ENCODE measurements at regions of chr3 and their contacts with region 1.

Region 1: GRCh38 chr3:171829841-171830517 is 13.2 kb upstream of the TMEM212 start:
- DNase-seq: peak; percentile 84 to 92 (median 88)
- ATAC-seq: peak; percentile 92 to 95 (median 93)
- H3K4me3 ChIP-seq: no peak overlapping the region
- H3K27ac ChIP-seq: peak overlapping the region; percentile 32 to 81 (median 50)
- H3K4me1 ChIP-seq: peaks cover 0 to 49% (median 28%) of the 10 kb centered on the region in 12 donors
- H3K27me3 ChIP-seq: no peaks in the 10 kb centered on the region
- CTCF ChIP-seq: peak; percentile 40 to 87 (median 70)
- POLR2A ChIP-seq: no peak

Region 2: DNA sequence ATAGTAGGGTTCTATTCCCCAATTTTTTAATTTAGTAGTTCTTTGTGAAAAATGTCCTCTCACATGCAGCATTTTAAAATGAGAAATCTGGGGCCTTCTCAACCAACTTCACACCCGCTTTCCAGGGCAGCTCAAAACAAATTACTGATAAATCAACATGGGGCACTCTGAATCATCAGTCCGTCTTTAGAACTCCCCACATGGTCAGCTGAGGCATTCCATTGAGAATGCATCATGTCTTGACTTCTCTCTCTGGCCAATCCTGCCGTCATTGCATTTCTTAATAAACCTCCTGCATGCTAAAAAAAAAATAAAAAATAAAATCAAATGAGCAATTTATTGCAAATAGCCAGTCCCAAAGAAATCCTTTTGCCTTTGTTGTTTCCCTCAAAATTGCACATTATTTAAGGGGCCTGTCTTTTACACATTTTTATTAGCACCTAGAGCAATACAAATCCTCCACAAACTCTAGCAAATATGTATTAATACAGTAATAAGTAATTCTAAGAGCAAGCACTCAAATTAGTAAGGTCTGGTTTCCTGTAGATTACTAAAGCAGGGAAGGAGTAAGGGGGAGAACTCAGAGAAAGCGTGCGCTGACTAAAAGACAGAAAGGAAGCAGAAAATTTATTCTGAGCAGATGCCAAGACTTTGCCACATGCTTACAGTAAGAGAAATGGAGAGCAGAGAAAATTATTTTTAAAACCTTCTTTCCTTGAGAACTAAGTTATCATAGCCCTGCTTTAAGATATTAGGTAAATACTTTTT is 545.5 kb before region 1 on chr3:
- intact Hi-C with region 1: no loop called
- DNase-seq: peak in 2 of 5 donors; percentile 36 to 48
- ATAC-seq: peak; percentile 66 to 91 (median 77)
- H3K4me3 ChIP-seq: no peak overlapping the region
- H3K27ac ChIP-seq: peak overlapping the region in 11 of 12 donors; percentile 19 to 81 (median 63)
- H3K4me1 ChIP-seq: peaks cover 0 to 52% (median 30%) of the 10 kb centered on the region in 12 donors
- H3K27me3 ChIP-seq: no peaks in the 10 kb centered on the region
- CTCF ChIP-seq: no peak
- POLR2A ChIP-seq: no peak

Region 3: DNA sequence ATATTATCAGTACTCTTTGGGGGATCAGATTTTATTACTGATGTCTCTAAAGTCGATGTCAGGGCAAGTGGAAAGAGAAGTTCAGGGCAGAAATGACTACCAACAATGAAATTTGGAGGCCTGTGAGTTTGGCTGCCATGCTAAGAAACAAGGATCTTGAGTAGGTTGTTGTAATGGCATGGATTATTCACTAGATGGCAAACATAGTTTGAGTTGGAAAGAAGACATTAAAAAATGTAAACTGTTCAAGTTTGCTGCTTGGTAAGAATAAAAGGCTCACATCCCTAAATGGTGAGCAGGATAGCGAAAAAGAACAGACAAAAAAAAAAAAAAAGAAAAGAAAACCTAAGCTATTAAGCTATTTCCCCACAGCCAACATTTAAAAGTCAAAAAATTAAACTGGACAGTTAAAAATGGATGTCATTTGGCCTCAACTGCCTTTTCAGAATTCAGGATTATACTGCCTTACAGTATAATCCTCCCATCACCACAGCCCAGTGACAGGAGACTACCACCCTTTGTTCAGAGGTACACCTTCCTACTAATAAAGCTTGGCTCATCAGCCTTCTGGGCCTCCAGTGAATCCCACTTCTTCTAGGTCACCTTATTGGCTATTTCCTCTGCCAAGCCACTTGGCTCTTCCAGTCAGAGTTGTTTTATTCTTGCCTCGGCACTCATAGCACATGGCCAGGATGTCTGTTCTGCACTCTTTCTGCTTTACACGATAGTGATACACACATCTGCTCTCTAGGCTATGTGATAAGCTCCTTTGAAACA is 183.4 kb before region 1 on chr3:
- intact Hi-C with region 1: loop called in 6 of 10 experiments (anchors 2 to 10 kb)
- DNase-seq: peak in 4 of 5 donors; percentile 34 to 56 (median 48)
- ATAC-seq: peak; percentile 62 to 91 (median 86)
- H3K4me3 ChIP-seq: no peak overlapping the region
- H3K27ac ChIP-seq: peak overlapping the region in 11 of 12 donors; percentile 10 to 84 (median 57)
- H3K4me1 ChIP-seq: peaks cover 0 to 57% (median 22%) of the 10 kb centered on the region in 12 donors
- H3K27me3 ChIP-seq: no peaks in the 10 kb centered on the region
- CTCF ChIP-seq: peak; percentile 50 to 74 (median 60)
- POLR2A ChIP-seq: no peak

Region 4: GRCh38 chr3:171743327-171744157 is 86.4 kb before region 1 on chr3:
- intact Hi-C with region 1: no loop called
- DNase-seq: no peak
- ATAC-seq: no peak
- H3K4me3 ChIP-seq: no peak overlapping the region
- H3K27ac ChIP-seq: peak overlapping the region in 9 of 12 donors; percentile 13 to 79 (median 50)
- H3K4me1 ChIP-seq: peaks cover 0 to 74% (median 47%) of the 10 kb centered on the region in 12 donors
- H3K27me3 ChIP-seq: no peaks in the 10 kb centered on the region
- CTCF ChIP-seq: no peak
- POLR2A ChIP-seq: no peak

Region 5: DNA sequence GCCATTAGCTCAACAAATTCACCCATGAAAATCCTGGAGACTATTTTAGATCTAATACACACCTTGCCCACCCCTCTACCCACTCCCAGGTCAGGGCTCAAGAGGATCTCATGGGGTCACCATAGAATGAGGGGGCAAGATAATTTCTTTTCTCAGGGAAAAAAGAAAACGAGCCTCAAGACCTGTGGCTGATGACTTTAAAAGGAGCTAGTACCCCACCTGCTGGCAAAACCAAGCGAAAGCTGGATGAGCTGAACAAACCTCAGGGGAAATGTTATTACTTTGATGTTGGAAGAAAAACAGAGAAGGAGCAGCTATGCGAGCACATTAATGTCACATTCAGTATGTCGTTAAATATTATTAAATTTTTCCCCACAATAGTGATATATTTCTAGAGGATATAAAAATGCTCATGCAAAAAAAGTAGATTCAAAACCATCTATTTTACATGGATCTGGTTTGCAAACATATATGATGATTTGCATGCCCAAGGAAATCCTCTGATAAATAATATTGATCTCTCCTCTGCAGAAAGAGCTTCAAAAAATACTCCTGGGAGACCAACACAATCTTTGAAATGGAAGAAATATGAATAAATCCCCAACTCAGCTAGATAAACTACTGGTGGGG is 57.4 kb before region 1 on chr3:
- intact Hi-C with region 1: loop called in 2 of 10 experiments (anchors 5 to 10 kb)
- DNase-seq: peak in 4 of 5 donors; percentile 39 to 66 (median 52)
- ATAC-seq: peak; percentile 20 to 44 (median 40)
- H3K4me3 ChIP-seq: no peak overlapping the region
- H3K27ac ChIP-seq: peak overlapping the region in 3 of 12 donors; percentile 71 to 81 (median 81)
- H3K4me1 ChIP-seq: peaks cover 0 to 49% (median 19%) of the 10 kb centered on the region in 12 donors
- H3K27me3 ChIP-seq: no peaks in the 10 kb centered on the region
- CTCF ChIP-seq: peak; percentile 41 to 80 (median 67)
- POLR2A ChIP-seq: no peak

Region 6: GRCh38 chr3:172057059-172057458 is 227.1 kb after region 1 on chr3:
- intact Hi-C with region 1: no loop called
- DNase-seq: no peak
- ATAC-seq: no peak
- H3K4me3 ChIP-seq: no peak overlapping the region
- H3K27ac ChIP-seq: peak overlapping the region in 4 of 12 donors; percentile 4 to 38 (median 10)
- H3K4me1 ChIP-seq: peaks cover 16 to 96% (median 76%) of the 10 kb centered on the region in 12 donors
- H3K27me3 ChIP-seq: no peaks in the 10 kb centered on the region
- CTCF ChIP-seq: no peak
- POLR2A ChIP-seq: no peak

Region 7: GRCh38 chr3:172201136-172201869 is 371.3 kb after region 1 on chr3:
- intact Hi-C with region 1: loop called in 1 of 10 experiments (anchors 10 kb)
- DNase-seq: peak; percentile 89 to 92 (median 91)
- ATAC-seq: peak; percentile 87 to 93 (median 88)
- H3K4me3 ChIP-seq: peak overlapping the region in 2 of 12 donors; percentile 0 to 13
- H3K27ac ChIP-seq: peak overlapping the region; percentile 60 to 91 (median 78)
- H3K4me1 ChIP-seq: peaks cover 10 to 66% (median 51%) of the 10 kb centered on the region in 12 donors
- H3K27me3 ChIP-seq: no peaks in the 10 kb centered on the region
- CTCF ChIP-seq: no peak
- POLR2A ChIP-seq: no peak

Region 8: DNA sequence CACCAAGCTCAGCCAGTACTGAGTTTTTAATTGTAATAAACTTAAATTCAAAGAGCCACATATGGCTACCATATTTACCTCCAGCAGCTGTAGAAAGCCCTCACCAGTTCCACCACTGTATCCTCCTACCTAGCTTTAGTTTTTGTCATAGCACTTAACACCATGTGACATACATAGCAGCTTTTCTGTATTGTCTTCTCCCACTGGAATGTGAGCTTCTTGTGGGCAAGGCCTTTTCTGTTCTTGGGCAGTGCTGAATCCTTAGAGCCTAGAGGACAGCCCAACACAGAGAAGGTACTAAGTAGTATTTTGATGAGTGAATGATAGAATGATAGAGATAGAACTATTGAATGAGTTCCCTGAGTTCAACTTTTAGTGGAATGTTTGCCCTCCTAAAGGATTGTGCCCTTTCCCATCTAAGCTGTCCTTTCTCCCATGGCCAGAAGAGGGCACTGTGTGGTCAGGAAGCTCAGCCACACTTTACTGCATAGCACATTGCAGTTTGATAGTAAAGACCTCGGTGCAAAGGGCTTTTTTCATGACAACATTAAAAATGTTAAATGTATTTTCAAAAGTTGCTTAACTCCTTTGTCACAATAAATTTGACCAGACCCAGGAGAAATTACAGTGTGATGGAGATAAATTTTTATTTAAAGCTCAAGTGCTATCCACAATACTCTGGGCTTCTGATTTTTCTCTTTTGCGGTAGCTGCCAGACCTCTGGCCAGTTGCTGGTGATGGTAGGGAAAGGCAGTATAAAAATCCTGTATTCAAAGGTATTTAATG is 502.5 kb after region 1 on chr3:
- intact Hi-C with region 1: loop called in 6 of 10 experiments (anchors 5 to 10 kb)
- DNase-seq: peak in 4 of 5 donors; percentile 50 to 63 (median 54)
- ATAC-seq: peak; percentile 76 to 89 (median 86)
- H3K4me3 ChIP-seq: no peak overlapping the region
- H3K27ac ChIP-seq: peak overlapping the region in 8 of 12 donors; percentile 3 to 63 (median 34)
- H3K4me1 ChIP-seq: peaks cover 0 to 11% (median 5%) of the 10 kb centered on the region in 12 donors
- H3K27me3 ChIP-seq: no peaks in the 10 kb centered on the region
- CTCF ChIP-seq: peak; percentile 82 to 95 (median 90)
- POLR2A ChIP-seq: no peak